Activated CD4-positive, alpha-beta T cell treated with anti-CD3 and anti-CD28 coated beads, Interleukin-2, amount 10 ng/mL, durations not matched to agents 24 days and 14 days (primary cell): ENCODE measurements at regions of chr5 and their contacts with region 1.

Region 1: DNA sequence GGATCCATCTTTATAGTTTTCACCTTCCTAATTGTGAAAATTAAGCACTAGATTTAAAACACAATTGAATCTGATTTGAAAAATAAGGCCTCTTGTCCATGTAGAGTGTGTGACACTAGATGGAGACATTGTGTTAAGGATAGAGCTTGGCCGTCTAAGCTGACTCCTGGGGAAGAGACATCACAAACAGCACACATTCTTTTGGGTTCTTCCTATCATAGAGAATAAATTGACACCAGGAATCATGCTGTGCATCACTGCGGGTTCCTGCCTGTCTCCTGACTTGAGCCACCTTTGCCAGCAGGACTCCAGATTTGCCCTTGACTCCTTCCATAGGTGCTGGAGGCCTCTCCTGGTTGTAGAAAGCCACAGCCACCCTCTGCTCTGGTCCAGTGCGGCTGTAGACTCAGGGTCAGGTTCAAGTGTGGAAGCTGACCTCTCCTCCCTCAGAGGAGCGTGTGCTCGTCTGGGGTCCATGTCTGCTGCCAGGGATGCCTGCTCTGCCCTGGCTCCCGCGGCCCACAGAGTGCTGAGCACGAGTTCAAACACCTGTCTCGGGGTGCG is 11.2 kb downstream of the ROPN1L start:
- DNase-seq: peak; percentile 83
- H3K4me3 Mint-ChIP-seq: no peak overlapping the region
- H3K27ac Mint-ChIP-seq: no peak overlapping the region
- H3K4me1 Mint-ChIP-seq: peaks cover 11% of the 10 kb centered on the region
- H3K27me3 Mint-ChIP-seq: no peaks in the 10 kb centered on the region

Region 2: DNA sequence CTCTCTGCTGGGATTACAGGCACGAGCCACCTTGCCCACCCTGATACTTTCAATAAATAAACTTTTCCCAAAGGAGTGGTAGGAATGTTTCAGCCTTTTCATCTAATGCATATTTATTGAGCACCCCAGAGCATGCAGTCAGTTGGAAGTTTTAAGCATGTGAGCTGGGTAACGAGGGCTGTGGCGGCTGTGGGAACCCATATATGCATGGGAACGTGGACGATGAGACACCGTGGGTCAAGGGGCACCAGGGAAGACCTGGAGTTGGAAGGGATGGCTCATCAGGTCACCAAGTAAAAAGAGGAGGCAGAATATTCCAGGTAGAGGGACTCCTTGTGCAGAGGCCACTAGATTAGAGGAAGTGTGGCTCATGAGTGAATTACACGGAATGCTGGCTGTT is 175.8 kb after region 1 on chr5:
- intact Hi-C with region 1: loop called (anchors 1 kb)
- DNase-seq: no peak
- H3K4me3 Mint-ChIP-seq: no peak overlapping the region
- H3K27ac Mint-ChIP-seq: peak overlapping the region; percentile 34
- H3K4me1 Mint-ChIP-seq: peaks cover 63% of the 10 kb centered on the region
- H3K27me3 Mint-ChIP-seq: no peaks in the 10 kb centered on the region

Region 3: DNA sequence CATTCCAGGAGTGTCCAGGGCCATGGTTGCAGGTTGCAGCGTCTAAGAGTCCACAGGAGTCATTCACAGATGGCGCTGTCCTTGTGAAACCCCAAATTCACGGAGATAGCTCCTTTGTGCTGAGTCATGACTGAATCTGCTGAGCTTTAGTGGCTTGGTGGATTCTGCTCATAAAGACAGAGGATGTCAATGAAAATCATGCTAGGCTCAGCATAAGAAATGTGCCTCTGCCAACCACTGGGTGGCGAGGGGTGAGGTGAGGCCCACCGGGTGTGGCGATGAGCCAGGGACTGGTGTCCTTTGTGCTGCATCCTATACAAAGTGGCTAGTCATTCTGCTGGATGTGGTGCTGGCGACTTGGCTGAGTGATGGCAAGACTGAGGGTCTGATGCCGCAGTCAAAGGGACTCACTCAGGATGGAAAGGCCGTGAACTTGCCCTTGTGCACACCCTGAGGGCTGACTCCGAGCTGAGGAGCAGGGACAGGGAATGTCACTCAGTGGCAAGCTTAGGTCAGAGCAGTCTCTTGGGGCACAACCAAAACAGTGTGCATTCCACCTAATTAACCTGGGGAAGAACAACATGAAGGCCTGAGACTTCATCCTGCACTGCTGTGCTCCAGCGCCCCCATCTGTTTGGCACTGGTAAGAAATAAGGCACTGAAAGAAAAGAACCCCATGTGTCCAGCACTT is 236.7 kb after region 1 on chr5:
- intact Hi-C with region 1: loop called (anchors 2 kb)
- DNase-seq: peak; percentile 76
- H3K4me3 Mint-ChIP-seq: no peak overlapping the region
- H3K27ac Mint-ChIP-seq: peak overlapping the region; percentile 20
- H3K4me1 Mint-ChIP-seq: peaks cover 9% of the 10 kb centered on the region
- H3K27me3 Mint-ChIP-seq: no peaks in the 10 kb centered on the region

Region 4: GRCh38 chr5:10863763-10864383 is 411.0 kb after region 1 on chr5:
- intact Hi-C with region 1: loop called (anchors 2 kb)
- DNase-seq: peak; percentile 87
- H3K4me3 Mint-ChIP-seq: no peak overlapping the region
- H3K27ac Mint-ChIP-seq: no peak overlapping the region
- H3K4me1 Mint-ChIP-seq: no peaks in the 10 kb centered on the region
- H3K27me3 Mint-ChIP-seq: peaks cover 12% of the 10 kb centered on the region

Region 5: GRCh38 chr5:12023614-12024241 is 1570.9 kb after region 1 on chr5:
- intact Hi-C with region 1: loop called (anchors 10 kb)
- DNase-seq: no peak
- H3K4me3 Mint-ChIP-seq: no peak overlapping the region
- H3K27ac Mint-ChIP-seq: no peak overlapping the region
- H3K4me1 Mint-ChIP-seq: no peaks in the 10 kb centered on the region
- H3K27me3 Mint-ChIP-seq: no peaks in the 10 kb centered on the region